ENCODE measurements at regions of chr15 and their contacts with region 1.

Region 1: DNA sequence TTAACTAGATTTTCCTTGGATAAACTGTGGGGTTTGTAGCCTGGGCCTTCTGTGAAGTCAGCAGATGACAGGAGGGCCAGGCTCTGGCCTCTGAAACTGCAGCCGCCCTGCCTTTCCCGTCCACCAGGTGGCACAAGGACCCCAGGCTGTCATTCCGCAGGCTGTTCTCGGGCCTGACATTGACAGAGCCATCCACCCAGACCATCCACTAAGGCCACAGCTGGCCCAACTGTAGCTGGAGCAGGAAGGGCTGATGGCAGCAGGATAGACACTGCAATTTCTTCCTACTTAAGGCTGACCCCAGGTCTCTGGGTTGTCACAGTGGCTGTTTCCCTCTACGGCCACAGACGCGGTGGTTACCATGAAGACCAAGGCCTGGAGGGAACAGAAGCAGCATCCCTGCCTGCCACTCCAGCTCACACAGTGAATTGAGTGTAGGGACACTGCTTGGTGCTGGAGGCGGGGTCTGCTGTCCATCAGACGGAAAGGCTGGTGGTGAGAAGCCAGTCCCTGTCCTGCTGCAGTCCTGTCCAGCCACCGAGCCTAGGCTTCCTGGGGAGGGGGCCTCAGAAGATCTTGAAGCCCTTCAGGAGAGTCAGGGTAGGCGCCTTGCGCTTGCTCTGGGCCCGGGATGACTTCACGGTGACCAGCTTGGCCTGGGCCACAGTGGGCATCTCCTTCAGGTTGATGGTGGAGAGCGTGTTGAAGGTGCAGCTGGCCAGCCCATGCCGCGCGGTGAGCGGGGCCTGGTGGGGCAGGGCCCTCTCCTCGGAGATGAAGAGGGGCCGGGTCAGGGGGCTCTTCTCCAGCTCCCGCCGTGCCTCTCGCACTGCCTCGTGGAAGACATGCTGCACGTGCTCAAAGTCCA is 9.4 kb downstream of the SLC51B start:
- DNase-seq: peak; percentile 76 to 78
- ATAC-seq: peak; percentile 75 to 88 (median 84)
- H3K4me3 ChIP-seq: no peak overlapping the region
- H3K27ac ChIP-seq: peak overlapping the region in 9 of 10 donors; percentile 2 to 70 (median 42)
- H3K4me1 ChIP-seq: peaks cover 4 to 48% (median 25%) of the 10 kb centered on the region in 9 donors
- H3K27me3 ChIP-seq: no peaks in the 10 kb centered on the region
- CTCF ChIP-seq: peak; percentile 85 to 96 (median 93)

Region 2: GRCh38 chr15:65077981-65078352 is 23.4 kb after region 1 on chr15:
- intact Hi-C with region 1: loop called in 5 of 10 experiments (anchors 1 to 2 kb)
- DNase-seq: peak; percentile 58 to 79
- ATAC-seq: peak; percentile 41 to 71 (median 58)
- H3K4me3 ChIP-seq: peak overlapping the region in 4 of 10 donors; percentile 5 to 24 (median 18)
- H3K27ac ChIP-seq: peak overlapping the region in 9 of 10 donors; percentile 8 to 87 (median 59)
- H3K4me1 ChIP-seq: peaks cover 4 to 67% (median 27%) of the 10 kb centered on the region in 9 donors
- H3K27me3 ChIP-seq: peaks cover 0 to 34% (median 8%) of the 10 kb centered on the region in 7 donors
- CTCF ChIP-seq: peak; percentile 29 to 75 (median 59)

Region 3: DNA sequence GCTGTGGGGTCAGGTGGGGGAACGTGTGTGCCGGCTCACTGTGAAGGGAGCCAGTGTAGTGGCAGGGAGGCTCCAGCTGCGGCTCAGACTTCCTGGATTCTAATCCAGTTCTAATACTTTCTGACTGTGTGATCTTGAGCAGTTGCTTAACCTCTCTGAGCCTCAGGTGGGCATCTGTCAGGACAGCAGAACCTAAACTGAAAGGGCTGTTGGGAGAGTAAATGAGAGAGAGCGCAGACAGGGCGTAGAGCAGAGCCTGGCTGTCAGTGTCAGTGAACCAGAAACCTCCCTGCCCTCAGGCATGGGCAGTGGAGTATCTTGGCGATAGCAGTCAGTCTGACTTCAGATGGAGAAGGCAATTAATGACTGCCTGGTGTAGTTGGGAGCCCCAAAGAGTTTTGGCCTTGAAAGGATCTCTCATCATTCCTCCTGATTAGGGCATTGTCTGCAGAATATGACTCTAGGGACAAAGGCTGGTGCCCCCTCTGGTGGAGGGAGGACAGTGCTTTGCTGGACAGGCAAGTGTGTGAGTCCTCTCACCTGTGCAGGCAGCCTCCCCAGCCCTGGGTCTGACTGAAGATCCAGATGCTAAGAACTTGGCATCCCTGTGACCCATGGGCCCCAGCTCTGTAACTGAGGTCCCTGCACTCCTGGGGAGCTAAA is 31.6 kb after region 1 on chr15:
- intact Hi-C with region 1: loop called in 3 of 10 experiments (anchors 2 to 5 kb)
- DNase-seq: no peak
- ATAC-seq: no peak
- H3K4me3 ChIP-seq: no peak overlapping the region
- H3K27ac ChIP-seq: peak overlapping the region in 8 of 10 donors; percentile 76 to 94 (median 88)
- H3K4me1 ChIP-seq: peaks cover 14 to 90% (median 62%) of the 10 kb centered on the region in 9 donors
- H3K27me3 ChIP-seq: peaks cover 0 to 12% (median 0%) of the 10 kb centered on the region in 7 donors
- CTCF ChIP-seq: peak in 6 of 9 donors; percentile 35 to 53 (median 40)

Region 4: GRCh38 chr15:65095011-65095746 is 40.6 kb after region 1 on chr15:
- intact Hi-C with region 1: loop called in 8 of 10 experiments (anchors 2 to 10 kb)
- DNase-seq: no peak
- ATAC-seq: peak in 2 of 8 donors; percentile 8 to 18
- H3K4me3 ChIP-seq: no peak overlapping the region
- H3K27ac ChIP-seq: peak overlapping the region in 1 of 10 donors; percentile 17
- H3K4me1 ChIP-seq: peaks cover 0 to 29% (median 8%) of the 10 kb centered on the region in 9 donors
- H3K27me3 ChIP-seq: no peaks in the 10 kb centered on the region
- CTCF ChIP-seq: no peak

Region 5: GRCh38 chr15:65101411-65101890 is 46.9 kb after region 1 on chr15:
- intact Hi-C with region 1: loop called (anchors 1 to 10 kb)
- DNase-seq: peak; percentile 69 to 70
- ATAC-seq: peak in 7 of 8 donors; percentile 37 to 69 (median 60)
- H3K4me3 ChIP-seq: no peak overlapping the region
- H3K27ac ChIP-seq: no peak overlapping the region
- H3K4me1 ChIP-seq: peaks cover 0 to 7% (median 0%) of the 10 kb centered on the region in 9 donors
- H3K27me3 ChIP-seq: no peaks in the 10 kb centered on the region
- CTCF ChIP-seq: peak; percentile 59 to 83 (median 77)

Region 6: GRCh38 chr15:65275728-65276126 is 221.2 kb after region 1 on chr15:
- intact Hi-C with region 1: loop called in 2 of 10 experiments (anchors 10 kb)
- DNase-seq: no peak
- ATAC-seq: peak in 3 of 8 donors; percentile 38 to 66 (median 51)
- H3K4me3 ChIP-seq: no peak overlapping the region
- H3K27ac ChIP-seq: no peak overlapping the region
- H3K4me1 ChIP-seq: peaks cover 0 to 37% (median 12%) of the 10 kb centered on the region in 9 donors
- H3K27me3 ChIP-seq: no peaks in the 10 kb centered on the region
- CTCF ChIP-seq: no peak

Region 7: GRCh38 chr15:65286704-65287519 is 232.3 kb after region 1 on chr15 and contains the start of gene PARP16:
- intact Hi-C with region 1: loop called in 1 of 10 experiments (anchors 10 kb)
- DNase-seq: peak; percentile 88 to 92
- ATAC-seq: peak; percentile 95 to 97 (median 96)
- H3K4me3 ChIP-seq: peak within 1 kb of the TSS; percentile 49 to 91 (median 78)
- H3K27ac ChIP-seq: peak within 1 kb of the TSS; percentile 50 to 96 (median 93)
- H3K4me1 ChIP-seq: peaks cover 2 to 28% (median 20%) of the 10 kb centered on the region in 9 donors
- H3K27me3 ChIP-seq: no peaks in the 10 kb centered on the region
- CTCF ChIP-seq: peak; percentile 12 to 85 (median 58)
- total RNA-seq, gene PARP16: 3.3 to 5.2 (median 4.8) TPM